ENCODE measurements at regions of chr6 and their contacts with region 1.

Region 1: GRCh38 chr6:34027445-34027936 is 118.4 kb downstream of the GRM4 start:
- DNase-seq: peak; percentile 69 to 71
- H3K4me3 ChIP-seq: no peak overlapping the region
- H3K27ac ChIP-seq: peak overlapping the region in 1 of 5 donors; percentile 14
- H3K4me1 ChIP-seq: peaks cover 0 to 26% (median 18%) of the 10 kb centered on the region in 4 donors
- H3K27me3 ChIP-seq: peaks cover 0 to 25% (median 4%) of the 10 kb centered on the region in 3 donors
- CTCF ChIP-seq: peak in 5 of 7 experiments; percentile 64 to 95 (median 87)
- EP300 ChIP-seq: no peak
- POLR2A ChIP-seq: no peak

Region 2: DNA sequence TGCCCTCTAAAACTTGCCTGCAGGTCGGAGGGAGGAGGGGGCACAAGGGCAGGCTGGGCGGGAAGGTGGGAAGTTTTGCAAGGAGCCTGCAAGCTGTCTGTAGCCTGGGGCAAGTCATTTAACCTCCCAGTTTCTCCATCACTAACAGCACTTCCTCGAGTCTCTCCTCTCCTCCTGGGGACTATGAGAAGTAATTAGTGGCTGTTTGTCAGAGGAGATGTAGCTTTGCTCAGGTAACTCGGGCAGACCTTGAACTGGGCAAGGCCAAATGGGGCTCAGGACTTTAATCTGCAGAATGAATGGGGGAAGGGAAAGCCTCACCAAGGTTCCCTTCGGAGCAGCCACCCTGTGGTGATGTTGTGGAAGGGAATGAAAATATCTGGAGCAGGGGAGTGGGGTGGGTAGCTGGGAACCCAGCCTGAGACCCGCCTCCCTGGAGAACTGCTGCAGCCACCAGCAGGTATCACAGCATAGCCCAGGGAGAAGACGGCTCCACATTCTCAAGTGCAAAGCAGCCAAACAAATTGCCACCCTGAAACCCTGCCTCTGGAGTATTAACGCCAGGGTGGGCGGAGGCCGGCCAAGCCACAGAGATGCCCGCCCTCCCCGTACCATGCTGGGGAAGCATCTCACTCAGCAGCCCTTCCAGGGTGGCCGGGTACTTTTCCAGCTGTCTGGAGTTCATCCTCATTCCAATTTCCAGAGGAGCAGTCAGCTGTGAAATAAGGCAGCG is 232.4 kb before region 1 on chr6:
- intact Hi-C with region 1: loop called (anchors 10 kb)
- DNase-seq: no peak
- H3K4me3 ChIP-seq: no peak overlapping the region
- H3K27ac ChIP-seq: no peak overlapping the region
- H3K4me1 ChIP-seq: no peaks in the 10 kb centered on the region
- H3K27me3 ChIP-seq: peaks cover 0 to 67% (median 24%) of the 10 kb centered on the region in 3 donors
- CTCF ChIP-seq: no peak
- EP300 ChIP-seq: no peak
- POLR2A ChIP-seq: no peak